ENCODE measurements at regions of chrX and their contacts with region 1.

Region 1: GRCh38 chrX:104804018-104804417 is 238.0 kb downstream of the IL1RAPL2 start:
- DNase-seq: no peak
- H3K4me3 ChIP-seq: no peak overlapping the region
- CTCF ChIP-seq: no peak
- POLR2A ChIP-seq: no peak

Region 2: DNA sequence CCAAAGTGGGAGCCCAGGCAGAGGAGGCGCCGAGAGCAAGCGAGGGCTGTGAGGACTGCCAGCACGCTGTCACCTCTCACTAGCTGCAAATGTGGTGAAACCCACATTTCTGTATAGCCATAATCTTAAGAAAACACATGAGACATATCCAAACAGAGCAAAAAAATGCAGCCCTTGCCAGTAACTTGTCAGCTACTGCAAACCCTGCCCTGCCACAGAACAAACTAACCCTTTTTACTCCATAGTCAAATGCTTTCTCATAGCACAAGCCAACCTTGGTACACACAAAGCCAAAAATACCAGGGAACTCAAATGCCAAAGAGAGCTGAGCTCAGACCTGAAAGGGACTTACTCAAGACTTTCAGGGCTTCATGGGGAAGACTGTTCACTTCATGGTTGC is 1696.2 kb before region 1 on chrX:
- intact Hi-C with region 1: no loop called
- DNase-seq: no peak
- H3K4me3 ChIP-seq: no peak overlapping the region
- CTCF ChIP-seq: no peak
- POLR2A ChIP-seq: no peak

Region 3: DNA sequence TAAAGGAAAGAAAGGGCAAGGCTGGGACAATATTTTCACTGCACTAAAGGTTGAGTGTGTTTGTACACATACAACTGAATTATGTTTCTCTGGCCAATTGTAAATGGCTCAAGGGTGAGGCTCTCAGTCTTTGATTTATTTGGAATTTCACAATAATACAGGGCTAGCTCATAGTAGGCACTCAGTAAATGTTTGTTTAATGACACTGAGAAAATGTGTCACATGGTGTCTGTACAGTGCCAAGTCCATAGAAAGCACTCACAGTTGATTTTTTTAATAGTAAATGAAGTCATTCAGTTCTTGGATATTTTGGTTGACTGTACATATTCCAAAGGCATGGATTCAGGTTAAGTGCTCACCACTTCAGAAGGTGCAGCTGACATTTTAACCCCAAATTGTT is 61.7 kb before region 1 on chrX:
- intact Hi-C with region 1: no loop called
- DNase-seq: no peak
- H3K4me3 ChIP-seq: no peak overlapping the region
- CTCF ChIP-seq: no peak
- POLR2A ChIP-seq: no peak

Region 4: DNA sequence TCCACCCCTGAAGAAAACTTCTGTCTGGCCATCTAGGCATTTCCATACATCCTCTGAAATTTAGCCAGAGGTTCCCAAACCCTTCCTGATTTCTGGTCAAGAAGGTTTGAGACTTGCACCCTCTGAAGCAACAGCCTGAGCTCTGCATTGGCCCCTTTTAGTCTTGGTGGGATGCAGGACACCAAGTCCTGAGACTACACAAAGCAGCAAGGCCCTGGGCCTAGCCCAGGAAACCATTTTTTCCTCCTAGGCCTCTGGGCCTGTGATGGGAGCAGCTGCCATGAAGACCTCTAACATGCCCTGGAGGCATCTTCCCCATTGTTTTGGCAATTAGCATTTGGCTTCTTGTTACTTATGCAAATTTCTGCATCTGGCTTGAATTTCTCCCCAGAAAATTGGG is 41.4 kb before region 1 on chrX:
- intact Hi-C with region 1: loop called (anchors 1 kb)
- DNase-seq: no peak
- H3K4me3 ChIP-seq: no peak overlapping the region
- CTCF ChIP-seq: no peak
- POLR2A ChIP-seq: no peak

Region 5: DNA sequence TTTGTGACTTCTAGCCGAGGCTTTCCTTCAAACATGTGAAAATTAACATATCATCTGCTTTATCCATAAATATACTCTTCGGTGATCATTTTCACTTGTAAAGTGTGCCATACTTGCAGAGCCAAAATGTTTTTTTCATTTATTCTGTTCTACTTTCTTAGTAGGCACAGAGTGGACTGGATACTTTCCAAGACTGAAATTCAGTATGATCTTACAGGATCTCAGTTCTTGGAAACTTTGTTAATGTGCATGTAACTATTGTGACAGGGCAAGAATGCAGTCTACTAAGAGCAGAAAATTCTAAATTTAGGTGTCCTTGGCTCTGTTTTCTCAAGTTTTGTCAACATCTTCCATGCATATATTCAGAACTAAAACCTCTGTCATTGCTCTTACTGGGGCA is 131.6 kb after region 1 on chrX:
- intact Hi-C with region 1: loop called (anchors 5 kb)
- DNase-seq: no peak
- H3K4me3 ChIP-seq: no peak overlapping the region
- CTCF ChIP-seq: no peak
- POLR2A ChIP-seq: no peak